H1 (cell line): ENCODE measurements at regions of chr6 and their contacts with region 1.

Region 1: DNA sequence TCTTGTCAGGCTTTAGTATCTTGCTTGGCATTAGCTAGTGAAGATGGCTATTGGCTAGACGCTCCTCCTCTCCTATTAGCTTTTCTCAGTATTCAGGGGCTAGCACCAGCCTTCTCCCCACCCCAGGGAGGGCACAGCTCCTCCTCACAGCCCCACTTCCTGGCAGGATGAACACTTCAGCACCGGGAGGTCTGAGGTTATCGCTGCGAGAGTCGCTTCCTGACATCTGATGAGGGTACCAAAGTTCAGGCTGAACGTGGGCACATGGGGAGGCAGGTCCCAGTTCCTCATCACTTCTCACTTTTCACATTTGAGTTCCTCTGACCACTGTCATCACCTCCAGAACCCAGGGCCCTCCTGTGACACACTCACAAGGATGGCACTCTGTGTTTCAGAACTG is 66.6 kb downstream of the LAMA4 start:
- DNase-seq: no peak
- H3K4me3 ChIP-seq: no peak overlapping the region
- H3K27ac ChIP-seq: no peak overlapping the region
- H3K4me1 ChIP-seq: no peaks in the 10 kb centered on the region
- H3K27me3 ChIP-seq: no peaks in the 10 kb centered on the region
- CTCF ChIP-seq: no peak
- EP300 ChIP-seq: no peak
- POLR2A ChIP-seq: no peak
- RAD21 ChIP-seq: no peak

Region 2: GRCh38 chr6:112311950-112312547 is 124.3 kb after region 1 on chr6:
- CTCF ChIA-PET with region 1: interaction called, 10 read pairs
- POLR2A ChIA-PET with region 1: no interaction called
- DNase-seq: no peak
- H3K4me3 ChIP-seq: no peak overlapping the region
- H3K27ac ChIP-seq: no peak overlapping the region
- H3K4me1 ChIP-seq: no peaks in the 10 kb centered on the region
- H3K27me3 ChIP-seq: no peaks in the 10 kb centered on the region
- CTCF ChIP-seq: peak in 2 of 3 experiments; percentile 38 to 62; a peak in 3 of 4 replicates
- EP300 ChIP-seq: no peak
- POLR2A ChIP-seq: no peak
- RAD21 ChIP-seq: peak; percentile 75